AG04449 (cell line): ENCODE measurements at regions of chr5 and their contacts with region 1.

Region 1: DNA sequence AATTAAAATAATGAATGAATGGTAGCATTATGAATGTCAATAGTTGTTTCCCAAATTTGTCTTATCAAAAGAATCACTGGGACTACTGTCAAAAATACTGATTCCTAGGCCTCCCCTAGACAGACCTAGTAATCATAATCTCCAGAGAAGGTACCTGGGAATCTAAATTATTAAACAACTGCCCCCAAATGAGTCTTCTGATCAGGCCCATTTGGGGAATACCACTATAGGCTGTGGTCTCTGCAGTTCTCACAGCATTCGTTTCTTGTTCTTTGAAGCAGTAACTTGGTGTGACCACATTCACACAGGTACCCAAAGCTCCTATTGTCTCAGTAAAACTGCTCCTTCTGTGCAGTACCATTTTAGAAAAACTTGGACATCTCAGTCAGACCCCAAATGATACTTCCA is 230.9 kb downstream of the PIK3R1 start:
- DNase-seq: no peak
- H3K4me3 ChIP-seq: no peak overlapping the region
- CTCF ChIP-seq: no peak

Region 2: GRCh38 chr5:68460147-68460798 is 13.8 kb after region 1 on chr5:
- CTCF ChIA-PET with region 1: interaction called, 43 read pairs
- POLR2A ChIA-PET with region 1: no interaction called
- DNase-seq: no peak
- H3K4me3 ChIP-seq: no peak overlapping the region
- CTCF ChIP-seq: peak; percentile 52